ENCODE measurements at regions of chr1 and their contacts with region 1.

Region 1: DNA sequence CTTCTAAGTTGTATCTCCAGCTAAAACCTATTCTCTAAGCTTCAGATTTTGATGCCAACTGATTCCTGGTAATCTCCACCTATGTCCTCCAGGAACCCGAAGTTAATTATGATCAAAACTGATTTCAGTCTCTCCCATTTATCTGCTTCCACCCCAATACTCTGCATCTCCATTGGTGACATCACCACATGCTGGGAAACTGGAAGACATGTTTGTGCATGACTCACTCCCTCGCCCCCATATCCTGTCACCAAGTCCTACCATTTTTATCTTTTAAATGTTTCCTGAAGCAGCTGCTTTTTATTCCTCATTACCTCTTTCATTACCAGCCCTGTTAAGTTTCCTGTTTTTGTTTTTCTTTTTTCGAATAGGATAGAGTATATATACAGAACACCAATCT is 228.5 kb downstream of the LRRC40 start:
- DNase-seq: no peak
- H3K4me3 ChIP-seq: no peak overlapping the region
- H3K27ac ChIP-seq: no peak overlapping the region
- H3K4me1 ChIP-seq: no peaks in the 10 kb centered on the region
- H3K27me3 ChIP-seq: no peaks in the 10 kb centered on the region
- CTCF ChIP-seq: no peak
- EP300 ChIP-seq: no peak
- POLR2A ChIP-seq: no peak

Region 2: DNA sequence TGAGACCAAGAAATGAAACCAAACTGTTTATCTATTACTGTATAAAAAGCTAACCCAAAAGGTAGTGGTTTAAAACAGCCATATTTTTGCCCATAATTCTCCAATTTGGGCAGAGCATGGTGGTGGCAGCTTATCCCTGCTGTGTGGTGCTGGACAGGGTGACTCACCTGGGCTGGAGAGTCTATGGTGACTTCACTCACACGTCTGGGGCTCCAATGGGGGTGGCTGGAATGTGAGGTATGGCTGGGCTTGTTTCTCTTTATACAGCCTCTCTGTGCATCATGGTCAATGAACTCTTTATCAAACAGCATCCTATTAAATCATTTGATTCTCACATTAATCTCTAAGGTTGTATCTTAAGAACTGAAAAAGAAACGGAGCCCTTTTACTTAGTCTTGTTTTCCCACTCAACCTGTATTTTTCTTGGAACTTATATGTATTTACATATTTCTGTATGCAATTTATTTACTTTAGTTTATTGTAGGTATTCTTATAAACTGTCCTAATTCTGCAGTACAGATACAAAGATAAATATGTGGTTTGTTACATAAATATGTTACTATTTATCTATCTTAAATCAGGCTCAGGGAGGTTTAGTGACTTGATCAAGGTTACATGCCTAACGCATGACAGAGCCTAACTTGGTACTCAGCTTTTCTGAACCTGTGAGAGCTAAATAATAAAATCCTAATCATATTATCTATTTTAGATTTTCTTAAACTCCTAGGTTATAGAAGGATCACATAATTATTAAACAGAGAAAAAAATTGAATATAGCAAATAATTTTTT is 1707.1 kb before region 1 on chr1:
- intact Hi-C with region 1: loop called in 1 of 4 experiments (anchors 5 kb)
- DNase-seq: no peak
- H3K4me3 ChIP-seq: no peak overlapping the region
- H3K27ac ChIP-seq: no peak overlapping the region
- H3K4me1 ChIP-seq: peaks cover 2% of the 10 kb centered on the region
- H3K27me3 ChIP-seq: no peaks in the 10 kb centered on the region
- CTCF ChIP-seq: no peak
- EP300 ChIP-seq: no peak
- POLR2A ChIP-seq: no peak

Region 3: GRCh38 chr1:70156529-70157120 is 179.7 kb after region 1 on chr1:
- intact Hi-C with region 1: no loop called
- DNase-seq: no peak
- H3K4me3 ChIP-seq: no peak overlapping the region
- H3K27ac ChIP-seq: no peak overlapping the region
- H3K4me1 ChIP-seq: no peaks in the 10 kb centered on the region
- H3K27me3 ChIP-seq: no peaks in the 10 kb centered on the region
- CTCF ChIP-seq: no peak
- EP300 ChIP-seq: no peak
- POLR2A ChIP-seq: no peak

Region 4: DNA sequence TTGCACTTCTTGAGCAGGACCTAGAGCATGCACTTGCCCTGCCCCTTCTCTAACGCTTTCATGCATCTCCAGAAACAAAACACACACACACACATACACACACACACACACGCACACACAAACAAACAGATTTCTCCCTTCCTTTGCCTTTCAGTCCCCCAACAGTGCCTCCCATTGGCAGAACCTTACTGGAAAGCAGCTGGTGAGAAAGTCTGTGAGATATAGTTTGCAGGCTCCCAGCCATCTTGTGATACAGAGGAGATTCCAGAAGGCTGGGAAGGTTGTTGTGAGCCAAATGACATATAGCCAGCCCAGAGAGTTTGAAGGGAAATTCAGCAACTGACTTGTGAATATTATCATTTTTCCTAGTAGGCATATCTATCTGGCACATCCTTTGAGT is 1139.8 kb after region 1 on chr1:
- intact Hi-C with region 1: no loop called
- DNase-seq: no peak
- H3K4me3 ChIP-seq: no peak overlapping the region
- H3K27ac ChIP-seq: no peak overlapping the region
- H3K4me1 ChIP-seq: no peaks in the 10 kb centered on the region
- H3K27me3 ChIP-seq: no peaks in the 10 kb centered on the region
- CTCF ChIP-seq: no peak
- EP300 ChIP-seq: no peak
- POLR2A ChIP-seq: no peak